B cell (primary cell): ENCODE measurements at regions of chr6 and their contacts with region 1.

Region 1: GRCh38 chr6:20534295-20535262 is at the start of gene CDKAL1:
- DNase-seq: peak; percentile 92
- ATAC-seq: peak; percentile 93
- H3K4me3 ChIP-seq: peak within 1 kb of the TSS; percentile 86 to 92 (median 89)
- H3K4me3 Mint-ChIP-seq: peak within 1 kb of the TSS; percentile 96
- H3K27ac ChIP-seq: peak within 1 kb of the TSS; percentile 88 to 94
- H3K27ac Mint-ChIP-seq: peak within 1 kb of the TSS; percentile 97
- H3K4me1 ChIP-seq: peaks cover 14 to 16% of the 10 kb centered on the region in 2 donors
- H3K4me1 Mint-ChIP-seq: peaks cover 37% of the 10 kb centered on the region
- H3K27me3 ChIP-seq: no peaks in the 10 kb centered on the region
- H3K27me3 Mint-ChIP-seq: no peaks in the 10 kb centered on the region
- CTCF ChIP-seq: no peak
- total RNA-seq, gene CDKAL1: 33.3 and 35.5 TPM in 2 replicates

Region 2: GRCh38 chr6:20291764-20292580 is 242.6 kb before region 1 on chr6:
- CTCF ChIA-PET with region 1: interaction called, 33 read pairs
- POLR2A ChIA-PET with region 1: no interaction called
- intact Hi-C with region 1: loop called (anchors 1 kb)
- DNase-seq: peak; percentile 78
- ATAC-seq: peak; percentile 86
- H3K4me3 ChIP-seq: no peak overlapping the region
- H3K4me3 Mint-ChIP-seq: peak overlapping the region; percentile 49
- H3K27ac ChIP-seq: no peak overlapping the region
- H3K27ac Mint-ChIP-seq: no peak overlapping the region
- H3K4me1 ChIP-seq: no peaks in the 10 kb centered on the region
- H3K4me1 Mint-ChIP-seq: peaks cover 6% of the 10 kb centered on the region
- H3K27me3 ChIP-seq: no peaks in the 10 kb centered on the region
- H3K27me3 Mint-ChIP-seq: no peaks in the 10 kb centered on the region
- CTCF ChIP-seq: peak; percentile 97

Region 3: GRCh38 chr6:20319520-20320357 is 214.8 kb before region 1 on chr6:
- CTCF ChIA-PET with region 1: interaction called, 6 read pairs
- POLR2A ChIA-PET with region 1: interaction called, 4 read pairs
- intact Hi-C with region 1: loop called (anchors 1 kb)
- DNase-seq: peak; percentile 94
- ATAC-seq: peak; percentile 96
- H3K4me3 ChIP-seq: peak overlapping the region; percentile 59 to 65 (median 62)
- H3K4me3 Mint-ChIP-seq: peak overlapping the region; percentile 87
- H3K27ac ChIP-seq: peak overlapping the region; percentile 96
- H3K27ac Mint-ChIP-seq: peak overlapping the region; percentile 95
- H3K4me1 ChIP-seq: peaks cover 7 to 14% of the 10 kb centered on the region in 2 donors
- H3K4me1 Mint-ChIP-seq: peaks cover 16% of the 10 kb centered on the region
- H3K27me3 ChIP-seq: no peaks in the 10 kb centered on the region
- H3K27me3 Mint-ChIP-seq: peaks cover 5% of the 10 kb centered on the region
- CTCF ChIP-seq: no peak

Region 4: GRCh38 chr6:20467437-20467836 is 67.1 kb before region 1 on chr6:
- CTCF ChIA-PET with region 1: no interaction called
- POLR2A ChIA-PET with region 1: no interaction called
- intact Hi-C with region 1: no loop called
- DNase-seq: no peak
- ATAC-seq: no peak
- H3K4me3 ChIP-seq: no peak overlapping the region
- H3K4me3 Mint-ChIP-seq: no peak overlapping the region
- H3K27ac ChIP-seq: no peak overlapping the region
- H3K27ac Mint-ChIP-seq: no peak overlapping the region
- H3K4me1 ChIP-seq: no peaks in the 10 kb centered on the region
- H3K4me1 Mint-ChIP-seq: peaks cover 14% of the 10 kb centered on the region
- H3K27me3 ChIP-seq: no peaks in the 10 kb centered on the region
- H3K27me3 Mint-ChIP-seq: no peaks in the 10 kb centered on the region
- CTCF ChIP-seq: no peak

Region 5: DNA sequence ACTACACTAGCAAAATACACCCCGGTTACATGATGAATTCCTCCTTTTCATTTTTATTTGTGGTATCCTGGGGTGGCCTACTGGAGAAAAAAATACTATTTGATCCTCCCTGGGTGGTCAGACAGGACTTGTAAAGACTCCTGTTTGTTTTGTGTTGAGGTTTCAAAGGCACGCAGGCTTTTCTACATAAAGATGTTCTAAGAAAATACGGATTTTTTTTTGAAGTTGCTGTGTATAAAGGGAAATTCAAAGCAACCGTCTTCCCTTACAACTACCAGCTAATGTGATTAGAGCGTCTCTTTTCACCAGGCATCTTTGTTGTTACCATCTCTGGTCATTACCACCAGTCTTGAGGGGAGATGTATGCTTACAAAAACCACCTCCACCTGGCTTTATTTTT is 1246.1 kb after region 1 on chr6:
- CTCF ChIA-PET with region 1: no interaction called
- POLR2A ChIA-PET with region 1: no interaction called
- intact Hi-C with region 1: no loop called
- DNase-seq: no peak
- ATAC-seq: no peak
- H3K4me3 ChIP-seq: no peak overlapping the region
- H3K4me3 Mint-ChIP-seq: no peak overlapping the region
- H3K27ac ChIP-seq: no peak overlapping the region
- H3K27ac Mint-ChIP-seq: no peak overlapping the region
- H3K4me1 ChIP-seq: no peaks in the 10 kb centered on the region
- H3K4me1 Mint-ChIP-seq: no peaks in the 10 kb centered on the region
- H3K27me3 ChIP-seq: no peaks in the 10 kb centered on the region
- H3K27me3 Mint-ChIP-seq: no peaks in the 10 kb centered on the region
- CTCF ChIP-seq: no peak